CD4-positive, alpha-beta memory T cell (primary cell): ENCODE measurements at regions of chr15 and their contacts with region 1.

Region 1: DNA sequence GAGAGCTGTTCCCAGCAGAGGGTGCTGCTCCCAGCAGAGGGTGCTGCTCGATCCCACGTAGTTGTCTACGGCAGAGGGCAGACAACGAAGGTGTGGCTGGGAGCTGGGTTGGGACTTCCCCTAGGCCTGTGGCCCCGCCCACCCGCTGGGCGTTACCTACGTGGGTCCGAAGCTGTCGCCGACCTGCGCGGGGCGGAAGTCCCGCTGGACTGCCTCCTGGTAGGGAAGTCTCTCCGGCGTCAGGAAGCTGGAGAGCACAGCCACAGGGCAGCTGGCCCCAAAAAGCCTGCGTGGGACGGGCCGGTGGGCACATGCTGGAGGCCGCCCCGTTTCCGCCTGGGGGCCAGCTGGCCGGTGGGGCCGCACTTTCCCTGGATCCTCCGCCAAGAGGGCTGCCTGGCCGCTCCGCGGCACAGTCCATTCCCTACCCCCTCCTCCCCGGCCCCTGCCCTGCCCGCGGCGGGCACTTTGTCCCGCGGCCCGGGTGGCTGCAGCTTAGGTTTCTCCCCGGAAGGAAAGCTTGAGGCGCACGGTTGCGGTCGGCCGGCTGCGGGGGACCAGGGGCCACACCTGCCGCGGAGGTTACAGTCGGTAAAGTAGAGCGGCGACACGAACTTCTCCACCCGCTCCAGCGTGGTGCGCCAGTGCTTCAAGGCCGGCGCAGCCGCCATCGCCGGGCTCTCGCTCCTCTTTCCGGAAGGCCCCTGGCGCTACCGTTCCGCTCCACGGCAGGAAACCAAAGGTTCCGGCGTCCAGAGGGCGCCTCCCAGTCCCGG is at the start of gene MAN2C1:
- DNase-seq: peak; percentile 86 to 92 (median 87)
- H3K4me3 ChIP-seq: peak within 1 kb of the TSS; percentile 86 to 95
- H3K4me3 Mint-ChIP-seq: peak within 1 kb of the TSS; percentile 89 to 95 (median 92)
- H3K27ac ChIP-seq: peak within 1 kb of the TSS; percentile 93
- H3K27ac Mint-ChIP-seq: peak within 1 kb of the TSS; percentile 95 to 97 (median 96)
- H3K4me1 ChIP-seq: peaks cover 25% of the 10 kb centered on the region
- H3K4me1 Mint-ChIP-seq: peaks cover 7 to 37% (median 24%) of the 10 kb centered on the region in 4 donors
- H3K27me3 ChIP-seq: no peaks in the 10 kb centered on the region
- H3K27me3 Mint-ChIP-seq: no peaks in the 10 kb centered on the region
- total RNA-seq, gene MAN2C1: 448 to 449 TPM

Region 2: GRCh38 chr15:75249726-75250125 is 118.4 kb before region 1 on chr15:
- CTCF ChIA-PET with region 1: no interaction called
- POLR2A ChIA-PET with region 1: no interaction called
- intact Hi-C with region 1: no loop called
- DNase-seq: no peak
- H3K4me3 ChIP-seq: no peak overlapping the region
- H3K4me3 Mint-ChIP-seq: no peak overlapping the region
- H3K27ac ChIP-seq: no peak overlapping the region
- H3K27ac Mint-ChIP-seq: no peak overlapping the region
- H3K4me1 ChIP-seq: no peaks in the 10 kb centered on the region
- H3K4me1 Mint-ChIP-seq: no peaks in the 10 kb centered on the region
- H3K27me3 ChIP-seq: no peaks in the 10 kb centered on the region
- H3K27me3 Mint-ChIP-seq: peaks cover 8 to 13% of the 10 kb centered on the region in 2 donors

Region 3: DNA sequence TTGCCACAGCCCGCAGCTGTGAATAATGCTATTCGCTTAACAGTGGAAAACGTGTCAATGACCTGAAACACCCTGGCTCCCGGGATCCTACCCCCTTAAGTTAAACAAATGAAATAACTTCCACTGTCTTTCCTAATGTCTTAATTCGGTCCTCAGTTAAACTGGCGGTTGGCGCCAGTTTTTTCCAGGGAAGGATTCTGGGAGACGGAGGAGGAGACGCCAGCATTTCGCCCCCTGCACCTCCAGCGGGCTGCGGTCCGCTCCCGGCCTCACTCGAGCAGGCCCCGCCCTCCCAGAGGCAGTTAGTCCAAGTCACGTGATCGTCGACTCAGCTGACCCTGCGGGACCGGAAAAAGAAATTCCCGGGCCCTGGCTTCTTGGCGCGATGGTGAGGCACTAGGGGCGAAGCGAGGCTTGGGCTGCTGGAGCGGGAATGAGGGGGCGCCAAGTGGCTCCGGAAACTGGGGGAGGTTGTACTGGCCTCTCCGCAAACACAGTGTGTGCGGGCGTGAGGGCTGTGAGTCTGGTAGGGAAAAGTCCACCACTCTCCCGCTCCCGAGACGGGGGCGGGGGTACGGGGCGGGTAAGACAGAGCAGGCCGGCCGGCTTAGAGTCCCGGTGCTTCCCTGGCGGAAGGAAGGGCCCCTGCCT is 32.3 kb before region 1 on chr15 and contains the start of gene COMMD4:
- CTCF ChIA-PET with region 1: interaction called, 12 read pairs
- POLR2A ChIA-PET with region 1: interaction called, 21 read pairs
- intact Hi-C with region 1: no loop called
- DNase-seq: peak; percentile 58 to 71 (median 63)
- H3K4me3 ChIP-seq: peak within 1 kb of the TSS; percentile 47 to 68
- H3K4me3 Mint-ChIP-seq: peak within 1 kb of the TSS; percentile 90 to 93 (median 92)
- H3K27ac ChIP-seq: peak within 1 kb of the TSS; percentile 27
- H3K27ac Mint-ChIP-seq: peak within 1 kb of the TSS; percentile 81 to 92 (median 91)
- H3K4me1 ChIP-seq: peaks cover 15% of the 10 kb centered on the region
- H3K4me1 Mint-ChIP-seq: peaks cover 9 to 26% (median 18%) of the 10 kb centered on the region in 4 donors
- H3K27me3 ChIP-seq: no peaks in the 10 kb centered on the region
- H3K27me3 Mint-ChIP-seq: no peaks in the 10 kb centered on the region
- total RNA-seq, gene COMMD4: 33.9 to 36.4 TPM

Region 4: DNA sequence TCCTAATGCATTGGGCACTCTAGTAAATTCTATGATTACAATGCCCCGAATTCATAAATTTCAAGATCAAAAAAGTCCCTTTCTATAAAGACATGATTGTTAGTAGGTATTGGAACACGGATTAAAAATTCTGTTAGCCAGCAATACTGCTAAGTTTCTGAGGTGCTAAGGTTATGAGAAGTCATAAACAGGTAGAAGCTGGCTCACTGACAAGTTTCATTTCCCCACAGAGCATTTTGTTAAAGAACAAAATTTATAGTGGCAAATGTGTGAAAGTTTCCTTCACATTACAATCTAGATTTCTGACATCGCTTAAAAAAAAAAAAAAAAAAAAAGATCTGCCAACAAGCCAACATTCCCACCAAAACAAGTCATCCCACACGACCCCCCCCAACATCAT is 12.7 kb after region 1 on chr15:
- CTCF ChIA-PET with region 1: interaction called, 20 read pairs
- POLR2A ChIA-PET with region 1: interaction called, 16 read pairs
- intact Hi-C with region 1: no loop called
- DNase-seq: no peak
- H3K4me3 ChIP-seq: no peak overlapping the region
- H3K4me3 Mint-ChIP-seq: no peak overlapping the region
- H3K27ac ChIP-seq: no peak overlapping the region
- H3K27ac Mint-ChIP-seq: peak overlapping the region in 3 of 7 donors; percentile 53 to 77 (median 63)
- H3K4me1 ChIP-seq: no peaks in the 10 kb centered on the region
- H3K4me1 Mint-ChIP-seq: peaks cover 0 to 3% (median 2%) of the 10 kb centered on the region in 4 donors
- H3K27me3 ChIP-seq: no peaks in the 10 kb centered on the region
- H3K27me3 Mint-ChIP-seq: no peaks in the 10 kb centered on the region

Region 5: DNA sequence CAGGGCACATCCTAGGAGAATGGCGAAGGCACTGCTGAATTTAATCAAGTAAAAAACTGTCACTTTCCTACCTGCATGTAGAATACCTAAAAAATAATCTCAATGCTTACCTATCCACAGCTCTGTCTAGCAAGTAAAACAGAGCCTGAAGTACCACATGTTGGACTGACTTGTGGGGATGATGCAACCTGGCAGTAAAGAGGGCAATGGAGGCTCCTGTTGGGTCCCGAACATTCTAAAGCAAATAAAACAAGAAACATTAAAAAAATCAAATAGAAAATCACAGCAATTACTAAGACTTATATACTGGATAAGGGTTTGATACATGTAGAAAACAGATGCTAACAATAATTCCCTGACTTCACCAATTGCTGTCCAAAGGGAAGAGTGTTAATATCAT is 154.9 kb after region 1 on chr15:
- CTCF ChIA-PET with region 1: no interaction called
- POLR2A ChIA-PET with region 1: no interaction called
- intact Hi-C with region 1: no loop called
- DNase-seq: no peak
- H3K4me3 ChIP-seq: no peak overlapping the region
- H3K4me3 Mint-ChIP-seq: no peak overlapping the region
- H3K27ac ChIP-seq: no peak overlapping the region
- H3K27ac Mint-ChIP-seq: peak overlapping the region in 1 of 7 donors; percentile 17
- H3K4me1 ChIP-seq: no peaks in the 10 kb centered on the region
- H3K4me1 Mint-ChIP-seq: peaks cover 0 to 2% (median 0%) of the 10 kb centered on the region in 4 donors
- H3K27me3 ChIP-seq: no peaks in the 10 kb centered on the region
- H3K27me3 Mint-ChIP-seq: no peaks in the 10 kb centered on the region

Region 6: DNA sequence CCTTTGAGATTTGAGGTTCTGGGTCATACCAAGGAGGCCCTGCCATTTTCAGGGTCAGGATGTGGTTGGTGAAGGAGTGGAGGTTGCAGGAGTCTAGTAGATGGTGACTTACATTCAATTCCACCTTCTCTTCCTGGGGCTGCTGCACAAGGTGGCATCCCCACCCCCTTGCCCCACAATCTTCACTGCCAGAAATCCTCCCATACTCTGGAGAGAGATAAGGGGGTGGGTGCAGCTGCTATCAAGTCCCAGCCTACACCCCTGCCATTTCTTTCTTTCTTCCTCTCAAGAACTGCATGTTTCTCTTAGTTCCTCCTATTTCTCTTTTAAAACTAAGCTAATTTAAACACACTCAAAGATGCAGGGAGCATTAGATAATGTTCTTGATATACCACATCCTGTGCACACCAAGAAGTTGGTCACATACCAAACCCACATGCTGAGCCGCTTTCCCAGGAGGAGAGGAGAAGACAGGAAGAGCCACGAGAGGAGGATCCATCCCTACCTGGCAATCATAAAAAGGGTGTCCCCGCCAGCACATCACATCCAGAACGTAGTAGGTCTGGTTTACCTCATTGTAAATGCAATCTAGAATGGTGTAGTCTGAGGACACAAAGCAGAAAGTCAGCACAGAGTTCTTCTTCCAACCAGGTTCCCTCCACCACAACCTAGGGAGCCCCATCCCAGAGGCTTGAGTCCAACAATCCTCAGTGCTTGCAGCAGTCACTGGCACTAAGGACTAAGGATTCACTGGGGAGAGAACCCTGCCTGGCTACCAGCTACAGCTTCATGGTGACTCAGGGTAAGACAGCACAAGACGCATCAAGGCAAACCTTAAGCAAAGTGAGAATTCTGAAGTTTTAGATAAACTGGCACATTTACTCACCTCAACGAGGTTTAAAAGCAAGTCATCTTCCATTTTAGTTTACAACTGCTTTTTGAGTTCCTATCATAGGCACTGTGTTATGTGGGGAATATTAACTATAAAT is 238.9 kb after region 1 on chr15:
- CTCF ChIA-PET with region 1: interaction called, 3 read pairs
- POLR2A ChIA-PET with region 1: interaction called, 14 read pairs
- intact Hi-C with region 1: no loop called
- DNase-seq: peak; percentile 43 to 57 (median 52)
- H3K4me3 ChIP-seq: peak overlapping the region; percentile 5 to 40
- H3K4me3 Mint-ChIP-seq: peak overlapping the region; percentile 71 to 82 (median 78)
- H3K27ac ChIP-seq: peak overlapping the region; percentile 39
- H3K27ac Mint-ChIP-seq: peak overlapping the region; percentile 78 to 94 (median 91)
- H3K4me1 ChIP-seq: peaks cover 47% of the 10 kb centered on the region
- H3K4me1 Mint-ChIP-seq: peaks cover 34 to 56% (median 46%) of the 10 kb centered on the region in 4 donors
- H3K27me3 ChIP-seq: no peaks in the 10 kb centered on the region
- H3K27me3 Mint-ChIP-seq: no peaks in the 10 kb centered on the region

Region 7: GRCh38 chr15:75647370-75648155 is 279.5 kb after region 1 on chr15 and contains the start of gene SNX33:
- CTCF ChIA-PET with region 1: interaction called, 69 read pairs
- POLR2A ChIA-PET with region 1: interaction called, 110 read pairs
- intact Hi-C with region 1: no loop called
- DNase-seq: peak; percentile 43 to 82 (median 49)
- H3K4me3 ChIP-seq: peak within 1 kb of the TSS; percentile 64 to 73
- H3K4me3 Mint-ChIP-seq: peak within 1 kb of the TSS; percentile 86 to 91 (median 89)
- H3K27ac ChIP-seq: peak within 1 kb of the TSS; percentile 45
- H3K27ac Mint-ChIP-seq: peak within 1 kb of the TSS; percentile 66 to 91 (median 86)
- H3K4me1 ChIP-seq: peaks cover 32% of the 10 kb centered on the region
- H3K4me1 Mint-ChIP-seq: peaks cover 20 to 53% (median 37%) of the 10 kb centered on the region in 4 donors
- H3K27me3 ChIP-seq: no peaks in the 10 kb centered on the region
- H3K27me3 Mint-ChIP-seq: no peaks in the 10 kb centered on the region
- total RNA-seq, gene SNX33: 3.5 to 3.8 TPM